Calu3 (cell line): ENCODE measurements at regions of chr17 and their contacts with region 1.

Region 1: GRCh38 chr17:27993723-27994310 is 48.7 kb upstream of the NLK start:
- DNase-seq: no peak
- H3K4me3 Mint-ChIP-seq: no peak overlapping the region
- H3K27ac Mint-ChIP-seq: no peak overlapping the region
- H3K4me1 Mint-ChIP-seq: peaks cover 9% of the 10 kb centered on the region
- H3K27me3 Mint-ChIP-seq: peaks cover 11% of the 10 kb centered on the region
- CTCF ChIP-seq: no peak

Region 2: GRCh38 chr17:28041068-28041843 is 47.4 kb after region 1 on chr17:
- CTCF ChIA-PET with region 1: interaction called, 3 read pairs
- intact Hi-C with region 1: loop called (anchors 5 kb)
- DNase-seq: peak; percentile 99
- H3K4me3 Mint-ChIP-seq: peak overlapping the region; percentile 93
- H3K27ac Mint-ChIP-seq: peak overlapping the region; percentile 98
- H3K4me1 Mint-ChIP-seq: peaks cover 26% of the 10 kb centered on the region
- H3K27me3 Mint-ChIP-seq: peaks cover 13% of the 10 kb centered on the region
- CTCF ChIP-seq: no peak

Region 3: DNA sequence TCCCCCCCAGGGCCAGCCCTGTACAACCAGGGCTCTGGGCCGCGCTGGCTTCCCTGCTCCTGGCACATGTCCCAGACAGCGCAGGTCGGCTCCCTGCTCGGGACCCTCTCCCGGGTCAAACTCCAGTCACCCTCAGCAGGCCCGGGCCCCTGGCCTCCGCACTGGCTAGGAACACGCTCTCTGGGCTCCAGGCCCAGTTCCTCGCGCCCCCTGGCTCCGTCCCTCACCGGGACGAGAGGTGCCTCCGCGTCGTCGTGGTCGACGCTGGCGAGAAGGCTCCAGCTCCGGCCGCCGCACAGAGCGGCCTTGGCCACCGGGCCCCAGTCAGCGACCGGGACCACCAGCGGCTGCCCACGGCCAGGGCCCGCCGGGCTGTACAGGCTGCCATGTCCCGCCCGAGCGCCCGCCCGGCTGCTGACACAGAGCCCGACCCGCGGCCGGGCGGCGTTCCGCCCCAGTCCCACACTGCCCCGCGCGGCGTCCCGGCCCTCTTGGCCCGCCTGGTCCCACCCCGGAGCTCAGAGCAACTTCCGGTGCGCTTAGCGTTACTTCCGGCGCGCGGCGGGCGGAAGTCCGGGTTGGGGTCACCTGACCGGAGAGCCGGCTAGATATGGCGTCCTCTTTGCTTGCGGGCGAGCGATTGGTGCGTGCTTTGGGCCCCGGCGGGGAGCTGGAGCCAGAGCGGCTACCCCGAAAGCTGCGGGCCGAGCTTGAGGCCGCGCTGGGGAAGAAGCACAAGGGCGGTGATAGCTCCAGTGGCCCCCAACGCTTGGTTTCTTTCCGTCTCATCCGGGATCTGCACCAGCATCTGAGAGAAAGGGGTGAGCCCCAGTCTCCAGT is 363.5 kb after region 1 on chr17 and contains the start of gene POLDIP2:
- CTCF ChIA-PET with region 1: no interaction called
- intact Hi-C with region 1: no loop called
- DNase-seq: peak; percentile 96
- H3K4me3 Mint-ChIP-seq: peak within 1 kb of the TSS; percentile 91
- H3K27ac Mint-ChIP-seq: peak within 1 kb of the TSS; percentile 87
- H3K4me1 Mint-ChIP-seq: peaks cover 13% of the 10 kb centered on the region
- H3K27me3 Mint-ChIP-seq: no peaks in the 10 kb centered on the region
- CTCF ChIP-seq: no peak
- total RNA-seq, gene POLDIP2: 82.7 and 85.9 TPM in 2 replicates